ENCODE measurements at regions of chr1 and their contacts with region 1.

Region 1: GRCh38 chr1:76998582-76999223 is 131.4 kb downstream of the ST6GALNAC5 start:
- DNase-seq: peak in 1 of 2 experiments; percentile 97
- H3K4me3 ChIP-seq: peak overlapping the region; percentile 17; the same call in 1 of the 2 replicates
- H3K27ac ChIP-seq: peak overlapping the region; percentile 99
- H3K4me1 ChIP-seq: peaks cover 15% of the 10 kb centered on the region
- H3K27me3 ChIP-seq: no peaks in the 10 kb centered on the region
- CTCF ChIP-seq: no peak

Region 2: GRCh38 chr1:76901158-76901767 is 97.4 kb before region 1 on chr1:
- CTCF ChIA-PET with region 1: no interaction called
- POLR2A ChIA-PET with region 1: no interaction called
- intact Hi-C with region 1: loop called (anchors 10 kb)
- DNase-seq: peak in 1 of 2 experiments; percentile 35
- H3K4me3 ChIP-seq: no peak overlapping the region
- H3K27ac ChIP-seq: no peak overlapping the region
- H3K4me1 ChIP-seq: peaks cover 10% of the 10 kb centered on the region
- H3K27me3 ChIP-seq: no peaks in the 10 kb centered on the region
- CTCF ChIP-seq: peak; percentile 88

Region 3: GRCh38 chr1:77018761-77019160 is 20.1 kb after region 1 on chr1:
- CTCF ChIA-PET with region 1: no interaction called
- POLR2A ChIA-PET with region 1: interaction called, 3 read pairs
- intact Hi-C with region 1: loop called (anchors 2 kb)
- DNase-seq: peak; percentile 39 to 96
- H3K4me3 ChIP-seq: no peak overlapping the region
- H3K27ac ChIP-seq: peak overlapping the region; percentile 77
- H3K4me1 ChIP-seq: peaks cover 29% of the 10 kb centered on the region
- H3K27me3 ChIP-seq: no peaks in the 10 kb centered on the region
- CTCF ChIP-seq: no peak

Region 4: GRCh38 chr1:77060000-77060399 is 61.3 kb after region 1 on chr1:
- CTCF ChIA-PET with region 1: no interaction called
- POLR2A ChIA-PET with region 1: no interaction called
- intact Hi-C with region 1: loop called (anchors 5 kb)
- DNase-seq: peak; percentile 67 to 73
- H3K4me3 ChIP-seq: no peak overlapping the region
- H3K27ac ChIP-seq: no peak overlapping the region
- H3K4me1 ChIP-seq: no peaks in the 10 kb centered on the region
- H3K27me3 ChIP-seq: no peaks in the 10 kb centered on the region
- CTCF ChIP-seq: no peak